ENCODE measurements at regions of chr6 and their contacts with region 1.

Region 1: GRCh38 chr6:129015721-129016120 is 132.8 kb downstream of the LAMA2 start:
- DNase-seq: no peak
- H3K4me3 Mint-ChIP-seq: no peak overlapping the region
- H3K27ac Mint-ChIP-seq: no peak overlapping the region
- H3K4me1 Mint-ChIP-seq: no peaks in the 10 kb centered on the region
- H3K27me3 Mint-ChIP-seq: no peaks in the 10 kb centered on the region

Region 2: GRCh38 chr6:128964771-128965170 is 51.0 kb before region 1 on chr6:
- intact Hi-C with region 1: loop called (anchors 1 kb)
- DNase-seq: no peak
- H3K4me3 Mint-ChIP-seq: no peak overlapping the region
- H3K27ac Mint-ChIP-seq: no peak overlapping the region
- H3K4me1 Mint-ChIP-seq: no peaks in the 10 kb centered on the region
- H3K27me3 Mint-ChIP-seq: no peaks in the 10 kb centered on the region